CD4-positive, alpha-beta memory T cell (primary cell): ENCODE measurements at regions of chr22 and their contacts with region 1.

Region 1: GRCh38 chr22:21712894-21713712 is 22.5 kb downstream of the YPEL1 start:
- DNase-seq: peak; percentile 52 to 67 (median 62)
- H3K4me3 ChIP-seq: no peak overlapping the region
- H3K4me3 Mint-ChIP-seq: peak overlapping the region in 3 of 8 donors; percentile 36 to 60 (median 58)
- H3K27ac ChIP-seq: no peak overlapping the region
- H3K27ac Mint-ChIP-seq: peak overlapping the region in 6 of 7 donors; percentile 1 to 79 (median 70)
- H3K4me1 ChIP-seq: no peaks in the 10 kb centered on the region
- H3K4me1 Mint-ChIP-seq: peaks cover 3 to 13% (median 9%) of the 10 kb centered on the region in 4 donors
- H3K27me3 ChIP-seq: no peaks in the 10 kb centered on the region
- H3K27me3 Mint-ChIP-seq: no peaks in the 10 kb centered on the region

Region 2: GRCh38 chr22:21766691-21767462 is 53.8 kb after region 1 on chr22:
- CTCF ChIA-PET with region 1: no interaction called
- POLR2A ChIA-PET with region 1: no interaction called
- intact Hi-C with region 1: loop called (anchors 2 kb)
- DNase-seq: peak; percentile 61 to 81 (median 65)
- H3K4me3 ChIP-seq: no peak overlapping the region
- H3K4me3 Mint-ChIP-seq: peak overlapping the region in 7 of 8 donors; percentile 59 to 86 (median 73)
- H3K27ac ChIP-seq: peak overlapping the region; percentile 41
- H3K27ac Mint-ChIP-seq: peak overlapping the region; percentile 91 to 95 (median 94)
- H3K4me1 ChIP-seq: peaks cover 69% of the 10 kb centered on the region
- H3K4me1 Mint-ChIP-seq: peaks cover 50 to 69% (median 62%) of the 10 kb centered on the region in 4 donors
- H3K27me3 ChIP-seq: no peaks in the 10 kb centered on the region
- H3K27me3 Mint-ChIP-seq: no peaks in the 10 kb centered on the region

Region 3: DNA sequence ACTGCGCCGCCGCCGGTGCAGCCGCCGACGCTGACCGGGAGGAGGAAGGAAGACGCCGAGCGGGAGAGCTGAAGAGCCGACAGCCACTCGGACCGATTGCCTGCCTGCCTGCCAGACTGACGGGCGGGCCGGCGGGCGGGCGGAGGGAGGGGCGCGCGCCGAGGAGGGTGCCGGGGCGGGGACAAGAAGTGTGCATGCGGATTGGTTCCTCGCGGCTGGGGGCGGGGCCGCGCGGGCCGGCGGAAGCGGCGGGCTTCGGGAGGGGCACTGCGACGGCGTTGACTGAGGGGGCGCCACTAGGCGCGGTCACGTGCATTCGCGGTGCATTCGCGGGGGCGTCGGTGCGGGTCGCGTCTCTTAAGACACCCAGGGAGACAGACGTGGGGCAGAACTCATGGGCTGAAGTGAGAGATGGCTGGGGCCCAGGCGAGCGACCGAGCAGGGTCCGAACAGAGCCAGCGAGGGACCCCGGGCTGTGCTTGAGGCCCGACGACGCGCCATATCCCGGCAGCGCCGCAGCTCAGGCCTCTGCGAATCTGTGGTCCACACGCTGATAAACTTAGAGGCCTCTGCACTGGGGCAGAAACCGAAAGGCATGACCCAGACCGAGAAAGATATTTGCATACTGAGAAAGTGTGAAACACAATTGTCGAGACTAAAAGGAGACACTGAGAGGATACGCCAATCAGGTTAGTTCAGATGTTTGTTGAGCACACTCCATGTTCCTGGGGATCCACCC is 154.6 kb after region 1 on chr22 and contains the start of gene MAPK1:
- CTCF ChIA-PET with region 1: no interaction called
- POLR2A ChIA-PET with region 1: no interaction called
- intact Hi-C with region 1: loop called (anchors 1 kb)
- DNase-seq: peak; percentile 91 to 93 (median 92)
- H3K4me3 ChIP-seq: peak within 1 kb of the TSS; percentile 78 to 90
- H3K4me3 Mint-ChIP-seq: peak within 1 kb of the TSS; percentile 94 to 99 (median 96)
- H3K27ac ChIP-seq: peak within 1 kb of the TSS; percentile 85
- H3K27ac Mint-ChIP-seq: peak within 1 kb of the TSS; percentile 92 to 99 (median 96)
- H3K4me1 ChIP-seq: peaks cover 44% of the 10 kb centered on the region
- H3K4me1 Mint-ChIP-seq: peaks cover 34 to 54% (median 41%) of the 10 kb centered on the region in 4 donors
- H3K27me3 ChIP-seq: no peaks in the 10 kb centered on the region
- H3K27me3 Mint-ChIP-seq: no peaks in the 10 kb centered on the region
- total RNA-seq, gene MAPK1: 114 to 117 TPM

Region 4: GRCh38 chr22:21938071-21938822 is 225.1 kb after region 1 on chr22:
- CTCF ChIA-PET with region 1: no interaction called
- POLR2A ChIA-PET with region 1: interaction called, 3 read pairs
- intact Hi-C with region 1: loop called (anchors 1 kb)
- DNase-seq: peak; percentile 83 to 88 (median 84)
- H3K4me3 ChIP-seq: peak overlapping the region; percentile 24 to 75
- H3K4me3 Mint-ChIP-seq: peak overlapping the region; percentile 70 to 89 (median 84)
- H3K27ac ChIP-seq: peak overlapping the region; percentile 63
- H3K27ac Mint-ChIP-seq: peak overlapping the region; percentile 64 to 95 (median 83)
- H3K4me1 ChIP-seq: peaks cover 26% of the 10 kb centered on the region
- H3K4me1 Mint-ChIP-seq: peaks cover 16 to 58% (median 29%) of the 10 kb centered on the region in 4 donors
- H3K27me3 ChIP-seq: no peaks in the 10 kb centered on the region
- H3K27me3 Mint-ChIP-seq: no peaks in the 10 kb centered on the region

Region 5: DNA sequence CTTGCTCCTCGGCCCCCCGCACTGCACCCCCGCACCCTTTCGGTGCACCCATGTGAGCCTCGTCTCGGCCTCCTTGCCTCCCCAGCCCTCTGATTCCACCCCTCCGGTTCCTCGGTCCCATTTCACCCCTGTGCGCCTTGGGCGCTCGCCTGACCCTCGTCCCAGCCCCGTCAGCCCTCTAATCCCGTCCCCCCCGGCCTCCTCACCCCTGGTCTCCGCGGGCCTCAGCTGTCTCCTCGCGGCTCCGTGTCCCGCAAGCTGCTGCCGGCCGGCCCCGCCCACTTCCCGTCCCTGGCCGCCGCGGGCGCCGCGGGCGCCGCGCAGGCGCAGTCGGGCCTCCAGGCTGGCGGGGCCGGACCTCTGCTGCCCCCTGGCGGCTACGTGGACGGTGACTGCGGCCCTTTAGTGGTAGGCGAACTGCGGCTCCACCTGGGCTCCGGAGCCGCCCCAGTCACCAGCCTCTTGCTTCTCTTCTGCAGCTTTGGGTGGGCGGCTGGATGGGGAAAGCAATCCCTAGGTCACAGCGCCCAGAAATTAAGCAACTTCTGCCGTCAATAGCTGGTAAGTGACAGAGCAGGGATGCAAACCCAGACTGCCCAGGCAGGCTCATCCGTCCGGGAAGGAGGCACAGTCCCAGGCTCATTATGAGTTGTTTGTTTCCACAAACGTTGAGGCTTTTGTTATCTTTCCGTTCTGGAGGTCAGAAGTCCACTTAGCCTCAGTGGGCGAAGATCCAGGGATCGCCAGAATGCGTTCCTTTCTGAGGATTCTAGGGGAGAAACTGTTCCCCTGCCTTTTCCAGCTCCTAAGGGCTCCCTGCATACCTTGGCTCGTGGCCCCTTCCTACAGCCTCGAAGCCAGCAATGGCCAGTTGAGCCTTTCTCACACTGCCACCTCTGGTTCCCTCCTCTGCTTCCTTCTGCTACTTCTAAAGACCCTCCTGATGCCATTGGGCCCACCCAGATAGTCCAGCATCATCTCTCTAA is 239.8 kb after region 1 on chr22 and contains the start of gene PPM1F:
- CTCF ChIA-PET with region 1: interaction called, 3 read pairs
- POLR2A ChIA-PET with region 1: no interaction called
- intact Hi-C with region 1: loop called (anchors 2 kb)
- DNase-seq: peak; percentile 80 to 96 (median 91)
- H3K4me3 ChIP-seq: peak within 1 kb of the TSS; percentile 37 to 70
- H3K4me3 Mint-ChIP-seq: peak within 1 kb of the TSS; percentile 82 to 90 (median 85)
- H3K27ac ChIP-seq: peak within 1 kb of the TSS; percentile 46
- H3K27ac Mint-ChIP-seq: peak within 1 kb of the TSS; percentile 46 to 86 (median 77)
- H3K4me1 ChIP-seq: peaks cover 24% of the 10 kb centered on the region
- H3K4me1 Mint-ChIP-seq: peaks cover 8 to 28% (median 11%) of the 10 kb centered on the region in 4 donors
- H3K27me3 ChIP-seq: no peaks in the 10 kb centered on the region
- H3K27me3 Mint-ChIP-seq: no peaks in the 10 kb centered on the region
- total RNA-seq, gene PPM1F: 23.3 to 25.4 TPM